ENCODE measurements at regions of chr9 and their contacts with region 1.

Region 1: DNA sequence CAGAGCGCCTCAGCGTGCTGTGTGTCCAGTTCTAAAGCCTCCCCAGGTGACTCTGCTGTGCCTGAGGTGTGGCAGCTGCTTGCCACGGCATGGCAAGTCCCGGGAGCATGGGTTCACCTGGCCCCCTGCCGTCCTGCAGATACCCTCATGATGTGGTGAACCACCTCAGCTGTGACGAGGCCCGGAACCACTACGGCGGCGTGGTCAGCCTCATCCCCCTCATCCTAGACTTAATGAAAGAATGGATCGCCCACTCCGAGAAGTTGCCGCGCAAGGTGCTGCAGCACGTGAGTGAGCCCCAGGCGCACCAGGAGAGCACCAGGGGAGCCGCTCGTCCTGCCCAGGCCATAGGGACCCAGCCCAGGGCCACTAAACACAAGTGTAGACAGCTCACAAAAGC is 9.5 kb downstream of the SPACA9 start:
- DNase-seq: no peak
- H3K4me3 Mint-ChIP-seq: no peak overlapping the region
- H3K27ac Mint-ChIP-seq: no peak overlapping the region
- H3K4me1 Mint-ChIP-seq: peaks cover 1% of the 10 kb centered on the region
- H3K27me3 Mint-ChIP-seq: no peaks in the 10 kb centered on the region

Region 2: GRCh38 chr9:132849185-132849706 is 38.9 kb before region 1 on chr9:
- CTCF ChIA-PET with region 1: no interaction called
- intact Hi-C with region 1: loop called (anchors 1 kb)
- DNase-seq: peak; percentile 31
- H3K4me3 Mint-ChIP-seq: peak overlapping the region; percentile 45
- H3K27ac Mint-ChIP-seq: peak overlapping the region; percentile 81
- H3K4me1 Mint-ChIP-seq: peaks cover 19% of the 10 kb centered on the region
- H3K27me3 Mint-ChIP-seq: no peaks in the 10 kb centered on the region

Region 3: GRCh38 chr9:133992780-133993634 is 1104.9 kb after region 1 on chr9:
- CTCF ChIA-PET with region 1: no interaction called
- intact Hi-C with region 1: no loop called
- DNase-seq: peak; percentile 74
- H3K4me3 Mint-ChIP-seq: peak overlapping the region; percentile 60
- H3K27ac Mint-ChIP-seq: no peak overlapping the region
- H3K4me1 Mint-ChIP-seq: peaks cover 2% of the 10 kb centered on the region
- H3K27me3 Mint-ChIP-seq: peaks cover 3% of the 10 kb centered on the region